ENCODE measurements at regions of chr14 and their contacts with region 1.

Region 1: GRCh38 chr14:54038724-54039123 is 82.1 kb upstream of the BMP4 start:
- DNase-seq: no peak
- ATAC-seq: no peak
- H3K4me3 ChIP-seq: no peak overlapping the region
- H3K4me3 Mint-ChIP-seq: no peak overlapping the region
- H3K27ac ChIP-seq: no peak overlapping the region
- H3K27ac Mint-ChIP-seq: no peak overlapping the region
- H3K4me1 ChIP-seq: no peaks in the 10 kb centered on the region
- H3K4me1 Mint-ChIP-seq: no peaks in the 10 kb centered on the region
- H3K27me3 ChIP-seq: no peaks in the 10 kb centered on the region
- H3K27me3 Mint-ChIP-seq: peaks cover 10% of the 10 kb centered on the region
- CTCF ChIP-seq: no peak

Region 2: GRCh38 chr14:54098536-54098935 is 59.8 kb after region 1 on chr14:
- CTCF ChIA-PET with region 1: no interaction called
- POLR2A ChIA-PET with region 1: no interaction called
- intact Hi-C with region 1: no loop called
- DNase-seq: no peak
- ATAC-seq: no peak
- H3K4me3 ChIP-seq: no peak overlapping the region
- H3K4me3 Mint-ChIP-seq: no peak overlapping the region
- H3K27ac ChIP-seq: no peak overlapping the region
- H3K27ac Mint-ChIP-seq: no peak overlapping the region
- H3K4me1 ChIP-seq: no peaks in the 10 kb centered on the region
- H3K4me1 Mint-ChIP-seq: no peaks in the 10 kb centered on the region
- H3K27me3 ChIP-seq: no peaks in the 10 kb centered on the region
- H3K27me3 Mint-ChIP-seq: peaks cover 5% of the 10 kb centered on the region
- CTCF ChIP-seq: no peak

Region 3: GRCh38 chr14:54114941-54115340 is 76.2 kb after region 1 on chr14:
- CTCF ChIA-PET with region 1: no interaction called
- POLR2A ChIA-PET with region 1: no interaction called
- intact Hi-C with region 1: loop called in 1 of 2 experiments (anchors 2 kb)
- DNase-seq: no peak
- ATAC-seq: no peak
- H3K4me3 ChIP-seq: no peak overlapping the region
- H3K4me3 Mint-ChIP-seq: no peak overlapping the region
- H3K27ac ChIP-seq: no peak overlapping the region
- H3K27ac Mint-ChIP-seq: no peak overlapping the region
- H3K4me1 ChIP-seq: no peaks in the 10 kb centered on the region
- H3K4me1 Mint-ChIP-seq: no peaks in the 10 kb centered on the region
- H3K27me3 ChIP-seq: no peaks in the 10 kb centered on the region
- H3K27me3 Mint-ChIP-seq: no peaks in the 10 kb centered on the region
- CTCF ChIP-seq: no peak

Region 4: GRCh38 chr14:54147282-54147681 is 108.6 kb after region 1 on chr14:
- CTCF ChIA-PET with region 1: no interaction called
- POLR2A ChIA-PET with region 1: no interaction called
- intact Hi-C with region 1: no loop called
- DNase-seq: no peak
- ATAC-seq: no peak
- H3K4me3 ChIP-seq: no peak overlapping the region
- H3K4me3 Mint-ChIP-seq: no peak overlapping the region
- H3K27ac ChIP-seq: no peak overlapping the region
- H3K27ac Mint-ChIP-seq: no peak overlapping the region
- H3K4me1 ChIP-seq: no peaks in the 10 kb centered on the region
- H3K4me1 Mint-ChIP-seq: no peaks in the 10 kb centered on the region
- H3K27me3 ChIP-seq: no peaks in the 10 kb centered on the region
- H3K27me3 Mint-ChIP-seq: peaks cover 11% of the 10 kb centered on the region
- CTCF ChIP-seq: no peak

Measured in CD4-positive, alpha-beta T cell (primary cell).